Ovary (tissue), 10 donors: ENCODE measurements at regions of chr17 and their contacts with region 1.

Region 1: DNA sequence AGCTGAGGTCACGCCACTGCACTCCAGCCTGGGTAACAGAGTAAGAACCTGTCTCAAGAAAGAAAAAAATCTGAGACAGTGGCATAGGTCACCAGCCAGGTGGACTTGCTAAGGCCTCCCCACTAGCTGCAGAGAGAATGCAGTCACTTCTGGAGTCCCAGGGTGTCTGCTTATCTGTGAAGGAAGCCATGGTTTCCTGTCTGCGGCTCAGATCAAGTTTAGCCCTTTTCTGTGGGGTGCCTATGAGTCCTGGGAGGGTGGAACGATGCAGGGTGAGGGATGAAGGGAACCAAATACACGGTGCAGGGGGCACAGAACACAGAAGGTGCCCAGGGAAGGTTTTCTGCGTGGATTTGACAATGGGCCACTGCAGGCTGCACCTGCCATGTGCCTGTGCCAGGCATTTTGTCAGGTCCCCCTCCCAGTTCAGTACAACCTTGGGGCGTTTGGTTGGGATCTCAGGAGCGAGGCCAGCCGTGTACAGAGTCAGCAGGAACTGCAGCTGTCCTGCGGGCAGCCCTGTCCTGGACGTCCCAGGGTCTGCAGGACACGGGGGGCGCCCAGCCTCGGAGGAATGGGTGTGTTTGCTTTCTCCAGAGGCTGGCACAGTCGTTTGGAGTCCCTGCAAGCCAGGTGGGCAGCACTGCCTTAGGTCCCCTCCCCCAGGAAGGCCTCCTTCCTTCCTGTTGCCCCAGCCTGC is 41.8 kb downstream of the RAB11FIP4 start:
- DNase-seq: no peak
- H3K4me3 ChIP-seq: no peak overlapping the region
- H3K27ac ChIP-seq: no peak overlapping the region
- H3K4me1 ChIP-seq: no peaks in the 10 kb centered on the region
- H3K27me3 ChIP-seq: no peaks in the 10 kb centered on the region
- CTCF ChIP-seq: no peak
- EP300 ChIP-seq: no peak
- POLR2A ChIP-seq: no peak

Region 2: GRCh38 chr17:31475378-31476162 is 42.3 kb after region 1 on chr17:
- intact Hi-C with region 1: loop called in 1 of 4 experiments (anchors 5 kb)
- DNase-seq: no peak
- H3K4me3 ChIP-seq: no peak overlapping the region
- H3K27ac ChIP-seq: no peak overlapping the region
- H3K4me1 ChIP-seq: no peaks in the 10 kb centered on the region
- H3K27me3 ChIP-seq: no peaks in the 10 kb centered on the region
- CTCF ChIP-seq: no peak
- EP300 ChIP-seq: no peak
- POLR2A ChIP-seq: no peak

Region 3: DNA sequence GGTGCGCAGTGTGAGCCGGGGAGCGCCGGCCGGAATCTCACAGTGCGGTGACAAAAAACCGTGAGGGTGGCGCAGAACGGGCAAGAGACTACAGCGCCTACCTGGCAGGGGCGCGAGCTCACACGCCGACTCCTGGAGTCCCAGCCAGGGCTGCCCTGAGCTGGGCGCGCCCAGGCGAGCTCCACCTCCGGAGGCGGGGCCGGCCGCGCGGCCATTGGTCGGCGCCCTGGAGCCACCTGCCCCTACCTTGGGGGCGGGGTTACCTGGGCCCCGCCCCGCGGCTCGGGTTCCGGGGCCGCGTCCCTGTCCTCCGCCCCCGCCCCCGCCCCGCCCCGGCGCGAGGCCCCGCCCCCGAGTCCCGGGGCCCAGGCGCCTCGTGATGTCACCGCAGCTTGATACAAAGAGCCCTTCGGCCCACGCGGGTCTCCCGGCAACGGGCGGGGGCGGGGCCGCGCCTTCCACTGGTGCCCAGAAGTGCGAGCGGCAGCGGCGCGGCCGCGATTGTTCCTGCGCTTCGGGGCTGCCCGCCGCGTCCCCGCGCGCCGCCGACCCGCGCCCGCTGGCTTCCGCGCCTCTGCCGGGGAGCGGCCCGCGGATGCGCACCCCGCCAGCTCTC is 54.5 kb after region 1 on chr17:
- intact Hi-C with region 1: loop called in 1 of 4 experiments (anchors 5 kb)
- DNase-seq: peak; percentile 84 to 88 (median 87)
- H3K4me3 ChIP-seq: peak overlapping the region; percentile 43
- H3K27ac ChIP-seq: no peak overlapping the region
- H3K4me1 ChIP-seq: peaks cover 2% of the 10 kb centered on the region
- H3K27me3 ChIP-seq: no peaks in the 10 kb centered on the region
- CTCF ChIP-seq: no peak
- EP300 ChIP-seq: no peak
- POLR2A ChIP-seq: peak; percentile 41

Region 4: GRCh38 chr17:31524926-31525800 is 91.9 kb after region 1 on chr17:
- intact Hi-C with region 1: loop called (anchors 2 to 10 kb)
- DNase-seq: peak; percentile 73 to 87 (median 83)
- H3K4me3 ChIP-seq: no peak overlapping the region
- H3K27ac ChIP-seq: no peak overlapping the region
- H3K4me1 ChIP-seq: peaks cover 6% of the 10 kb centered on the region
- H3K27me3 ChIP-seq: no peaks in the 10 kb centered on the region
- CTCF ChIP-seq: peak; percentile 55 to 75 (median 71)
- EP300 ChIP-seq: no peak
- POLR2A ChIP-seq: no peak

Region 5: DNA sequence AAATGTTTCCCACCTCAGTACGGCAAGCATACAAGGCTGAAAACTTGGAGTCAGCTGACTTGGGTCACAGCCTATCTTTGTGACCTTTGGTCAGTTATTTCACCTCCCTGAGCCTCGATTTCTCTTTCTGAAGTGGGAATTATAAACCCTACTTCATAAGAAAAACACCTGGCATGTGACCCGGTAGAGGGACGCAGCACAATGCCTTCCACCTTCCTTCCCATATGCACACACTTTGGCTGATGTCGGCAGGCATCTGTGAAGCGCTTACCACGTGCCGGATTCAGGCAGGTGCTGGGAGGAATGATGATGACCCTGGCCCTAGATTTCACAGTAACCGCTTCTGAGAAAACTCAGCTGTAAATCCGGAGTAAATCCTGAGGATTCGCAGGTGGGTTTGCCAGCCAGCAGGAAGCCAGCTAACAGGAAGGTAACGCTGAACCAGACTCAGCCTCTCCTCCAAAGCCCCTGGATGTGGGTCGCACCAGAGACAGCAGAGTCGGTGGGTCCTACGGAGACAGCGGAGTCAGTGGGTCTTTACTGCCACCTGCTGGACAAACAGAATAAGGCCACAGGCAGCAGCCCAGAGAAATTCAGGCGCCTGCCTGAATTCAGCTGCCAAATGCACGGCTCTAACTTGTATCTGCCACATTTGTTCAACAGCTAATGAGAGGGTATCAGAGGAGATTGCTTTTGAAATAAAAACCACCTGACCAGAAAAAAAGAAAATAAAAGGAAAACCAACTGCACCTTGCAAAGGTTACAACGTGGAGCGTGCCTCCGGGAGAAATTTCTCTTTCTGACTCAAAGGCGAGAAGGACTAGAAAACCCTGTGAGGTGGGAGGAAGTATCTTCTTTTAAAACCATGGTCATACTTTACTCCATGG is 409.2 kb after region 1 on chr17:
- intact Hi-C with region 1: loop called (anchors 5 to 10 kb)
- DNase-seq: peak; percentile 73 to 78 (median 78)
- H3K4me3 ChIP-seq: peak overlapping the region; percentile 24
- H3K27ac ChIP-seq: peak overlapping the region in 1 of 2 donors; percentile 55
- H3K4me1 ChIP-seq: peaks cover 8% of the 10 kb centered on the region
- H3K27me3 ChIP-seq: no peaks in the 10 kb centered on the region
- CTCF ChIP-seq: peak; percentile 92 to 95 (median 94)
- EP300 ChIP-seq: no peak
- POLR2A ChIP-seq: no peak